ENCODE measurements at regions of chr19 and their contacts with region 1.

Region 1: GRCh38 chr19:44113138-44113783 is at the start of gene ZNF225:
- DNase-seq: peak; percentile 96 to 99 (median 98)
- H3K4me3 ChIP-seq: peak within 1 kb of the TSS; percentile 59 to 98 (median 82)
- H3K27ac ChIP-seq: peak within 1 kb of the TSS in 50 of 59 donors; percentile 9 to 90 (median 70)
- H3K27me3 ChIP-seq: no peaks in the 10 kb centered on the region
- CTCF ChIP-seq: peak in 40 of 56 donors; percentile 3 to 56 (median 36)
- total RNA-seq, gene ZNF225: 4.5 to 14.2 (median 8.2) TPM

Region 2: GRCh38 chr19:43983912-43984686 is 129.2 kb before region 1 on chr19 and contains the start of gene ZNF155:
- intact Hi-C with region 1: loop called (anchors 1 to 5 kb)
- DNase-seq: peak; percentile 88 to 97 (median 95)
- H3K4me3 ChIP-seq: peak within 1 kb of the TSS; percentile 43 to 86 (median 73)
- H3K27ac ChIP-seq: peak within 1 kb of the TSS in 42 of 59 donors; percentile 1 to 84 (median 50)
- H3K27me3 ChIP-seq: no peaks in the 10 kb centered on the region
- CTCF ChIP-seq: peak in 10 of 56 donors; percentile 5 to 35 (median 14)
- total RNA-seq, gene ZNF155: 6.7 to 16.6 (median 10.8) TPM

Region 3: GRCh38 chr19:44025217-44025936 is 87.9 kb before region 1 on chr19 and contains the start of gene ZNF222:
- intact Hi-C with region 1: no loop called
- DNase-seq: peak; percentile 70 to 95 (median 88)
- H3K4me3 ChIP-seq: peak within 1 kb of the TSS; percentile 62 to 98 (median 87)
- H3K27ac ChIP-seq: peak within 1 kb of the TSS in 35 of 59 donors; percentile 6 to 84 (median 51)
- H3K27me3 ChIP-seq: peaks cover 0 to 6% (median 0%) of the 10 kb centered on the region in 45 donors
- CTCF ChIP-seq: peak in 8 of 56 donors; percentile 8 to 27 (median 16)
- total RNA-seq, gene ZNF222: 2.5 to 10.7 (median 7.0) TPM

Region 4: DNA sequence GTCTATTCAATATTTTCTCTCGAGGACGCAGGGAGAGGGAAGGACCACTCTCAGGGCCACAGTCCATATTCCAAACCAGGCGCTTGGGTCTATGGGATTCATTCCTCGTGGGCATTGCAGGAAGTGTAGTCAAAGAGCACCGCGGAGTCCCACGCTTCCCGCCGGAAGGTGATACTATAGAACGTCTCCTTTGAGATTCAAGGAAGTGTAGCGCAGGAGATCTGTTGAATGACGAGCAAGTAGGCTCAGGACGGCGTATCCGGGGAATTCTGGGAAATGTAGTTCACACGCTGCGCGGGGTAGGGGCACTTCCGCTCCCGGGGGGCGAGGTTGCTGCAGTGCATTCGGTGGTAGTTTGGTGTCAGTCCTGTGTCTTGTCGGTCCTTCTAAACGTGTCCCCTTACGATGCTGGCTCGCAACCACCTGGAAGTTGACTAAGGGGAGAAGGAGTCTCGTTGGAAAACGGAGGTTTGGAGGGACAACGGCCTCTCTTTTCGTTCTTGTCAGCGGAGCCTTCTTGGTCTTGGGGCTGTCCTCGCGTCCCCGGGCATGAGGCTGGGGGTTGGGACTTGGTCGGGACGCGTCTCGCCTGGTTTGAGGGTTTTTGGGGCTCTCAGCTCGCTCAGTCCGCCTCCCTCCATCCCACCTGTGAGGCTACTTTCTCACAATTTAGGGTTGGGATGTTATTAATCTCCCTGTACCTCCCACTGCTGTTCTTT is 41.3 kb before region 1 on chr19 and contains the start of gene ZNF284:
- intact Hi-C with region 1: loop called (anchors 1 to 5 kb)
- DNase-seq: peak; percentile 84 to 95 (median 92)
- H3K4me3 ChIP-seq: peak within 1 kb of the TSS; percentile 59 to 96 (median 79)
- H3K27ac ChIP-seq: peak within 1 kb of the TSS in 25 of 59 donors; percentile 3 to 73 (median 46)
- H3K27me3 ChIP-seq: no peaks in the 10 kb centered on the region
- CTCF ChIP-seq: peak in 22 of 56 donors; percentile 3 to 42 (median 21)
- total RNA-seq, gene ZNF284: 2.3 to 6.7 (median 4.1) TPM

Region 5: DNA sequence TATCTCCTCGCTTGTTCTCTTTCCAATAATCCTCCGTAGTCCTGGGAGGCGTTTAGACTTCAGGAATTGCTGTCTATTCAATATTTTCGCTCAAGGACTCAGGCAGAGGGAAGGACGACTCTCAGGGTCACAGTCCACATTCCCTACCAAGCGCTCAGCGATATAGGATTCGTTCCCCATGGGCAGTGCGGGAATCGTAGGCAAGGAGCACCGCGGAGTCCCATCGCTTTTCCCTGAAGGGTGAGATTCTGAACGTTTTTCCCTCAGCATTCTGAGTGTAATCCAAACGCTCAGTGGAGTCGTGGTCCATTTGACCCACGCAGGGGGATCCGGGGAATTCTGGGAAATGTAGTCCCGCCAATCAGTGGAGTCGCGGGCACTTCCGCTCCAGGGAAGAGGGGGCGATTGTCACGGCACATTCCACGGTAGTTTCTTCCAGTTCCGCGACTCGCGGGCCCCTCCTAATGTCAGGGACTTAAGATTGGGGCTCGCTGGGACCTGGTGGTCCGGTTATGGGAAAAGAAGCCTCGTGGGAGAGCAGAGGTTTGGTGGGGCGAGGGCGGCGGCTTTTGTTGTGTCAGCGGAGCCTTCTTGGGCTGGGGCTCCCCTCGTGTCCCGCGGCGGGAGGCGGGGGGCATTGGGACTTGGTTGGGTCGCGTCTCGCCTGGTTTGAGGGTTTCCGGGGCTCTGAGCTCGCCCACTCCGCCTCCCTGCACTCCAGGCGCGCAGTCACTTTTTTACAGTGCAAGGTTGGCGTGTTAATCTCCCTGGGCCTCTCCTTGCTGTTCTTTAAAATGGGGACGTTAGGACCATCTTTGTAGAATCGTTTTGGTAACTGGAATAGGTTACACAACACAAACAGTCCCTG is 28.2 kb after region 1 on chr19 and contains the start of gene ZNF234:
- intact Hi-C with region 1: loop called in 1 of 2 experiments (anchors 2 kb)
- DNase-seq: peak; percentile 78 to 93 (median 89)
- H3K4me3 ChIP-seq: peak within 1 kb of the TSS; percentile 68 to 99 (median 92)
- H3K27ac ChIP-seq: peak within 1 kb of the TSS in 52 of 59 donors; percentile 1 to 88 (median 76)
- H3K27me3 ChIP-seq: no peaks in the 10 kb centered on the region
- CTCF ChIP-seq: peak in 21 of 56 donors; percentile 1 to 34 (median 17)
- total RNA-seq, gene ZNF234: 8.8 to 27.0 (median 15.6) TPM

Region 6: GRCh38 chr19:44304659-44305193 is 191.5 kb after region 1 on chr19 and contains the start of gene ZNF235:
- intact Hi-C with region 1: loop called (anchors 10 kb)
- DNase-seq: peak; percentile 77 to 95 (median 92)
- H3K4me3 ChIP-seq: peak within 1 kb of the TSS; percentile 63 to 99 (median 89)
- H3K27ac ChIP-seq: peak within 1 kb of the TSS in 48 of 59 donors; percentile 2 to 89 (median 60)
- H3K27me3 ChIP-seq: no peaks in the 10 kb centered on the region
- CTCF ChIP-seq: peak in 17 of 56 donors; percentile 10 to 43 (median 25)
- total RNA-seq, gene ZNF235: 8.6 to 20.5 (median 14.1) TPM

Region 7: GRCh38 chr19:44455100-44455499 is 341.8 kb after region 1 on chr19:
- intact Hi-C with region 1: no loop called
- DNase-seq: no peak
- H3K4me3 ChIP-seq: no peak overlapping the region
- H3K27ac ChIP-seq: no peak overlapping the region
- H3K27me3 ChIP-seq: peaks cover 0 to 1% (median 0%) of the 10 kb centered on the region in 45 donors
- CTCF ChIP-seq: no peak

Measured in dorsolateral prefrontal cortex (tissue), 120 donors.